PC-3 (cell line): ENCODE measurements at regions of chr7 and their contacts with region 1.

Region 1: GRCh38 chr7:12322284-12322902 is 81.3 kb downstream of the VWDE start:
- DNase-seq: peak; percentile 56
- ATAC-seq: peak; percentile 57
- H3K4me3 ChIP-seq: no peak overlapping the region
- H3K27ac ChIP-seq: no peak overlapping the region
- H3K4me1 ChIP-seq: peaks cover 12% of the 10 kb centered on the region
- H3K27me3 ChIP-seq: no peaks in the 10 kb centered on the region
- CTCF ChIP-seq: peak; percentile 86

Region 2: DNA sequence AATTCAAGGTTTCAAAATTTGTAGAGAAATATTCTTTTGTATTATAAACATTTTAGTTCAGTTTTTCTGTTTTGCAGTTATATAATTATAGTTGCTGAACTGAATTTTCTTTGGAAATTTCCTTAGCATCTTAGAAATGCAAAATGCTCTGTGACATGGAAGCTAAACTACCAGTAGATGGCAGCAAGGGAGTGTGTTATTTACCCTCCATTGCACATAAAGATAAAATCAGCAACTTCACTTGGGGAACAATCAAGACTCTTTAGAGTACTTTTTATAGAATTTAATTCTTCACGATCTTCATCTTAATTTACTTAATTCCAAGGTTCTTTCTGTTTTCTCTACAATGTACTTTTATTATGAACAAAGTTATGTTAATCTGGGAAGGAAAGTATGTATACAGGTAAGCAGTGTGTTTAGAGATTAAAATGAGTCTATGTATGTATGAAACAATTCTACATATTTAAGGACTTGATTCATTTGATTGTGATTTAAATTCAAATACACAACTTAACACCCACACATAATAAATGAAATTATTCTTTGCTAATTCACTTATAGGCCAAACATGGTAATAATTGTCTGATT is 894.6 kb before region 1 on chr7:
- CTCF ChIA-PET with region 1: no interaction called
- POLR2A ChIA-PET with region 1: no interaction called
- intact Hi-C with region 1: loop called (anchors 1 kb)
- DNase-seq: peak; percentile 74
- ATAC-seq: peak; percentile 62
- H3K4me3 ChIP-seq: no peak overlapping the region
- H3K27ac ChIP-seq: no peak overlapping the region
- H3K4me1 ChIP-seq: no peaks in the 10 kb centered on the region
- H3K27me3 ChIP-seq: no peaks in the 10 kb centered on the region
- CTCF ChIP-seq: peak; percentile 87

Region 3: GRCh38 chr7:12067141-12067831 is 255.1 kb before region 1 on chr7:
- CTCF ChIA-PET with region 1: interaction called, 11 read pairs
- POLR2A ChIA-PET with region 1: no interaction called
- intact Hi-C with region 1: loop called (anchors 1 kb)
- DNase-seq: peak; percentile 83
- ATAC-seq: peak; percentile 50
- H3K4me3 ChIP-seq: peak overlapping the region; percentile 58
- H3K27ac ChIP-seq: peak overlapping the region; percentile 100
- H3K4me1 ChIP-seq: peaks cover 29% of the 10 kb centered on the region
- H3K27me3 ChIP-seq: no peaks in the 10 kb centered on the region
- CTCF ChIP-seq: peak; percentile 86

Region 4: DNA sequence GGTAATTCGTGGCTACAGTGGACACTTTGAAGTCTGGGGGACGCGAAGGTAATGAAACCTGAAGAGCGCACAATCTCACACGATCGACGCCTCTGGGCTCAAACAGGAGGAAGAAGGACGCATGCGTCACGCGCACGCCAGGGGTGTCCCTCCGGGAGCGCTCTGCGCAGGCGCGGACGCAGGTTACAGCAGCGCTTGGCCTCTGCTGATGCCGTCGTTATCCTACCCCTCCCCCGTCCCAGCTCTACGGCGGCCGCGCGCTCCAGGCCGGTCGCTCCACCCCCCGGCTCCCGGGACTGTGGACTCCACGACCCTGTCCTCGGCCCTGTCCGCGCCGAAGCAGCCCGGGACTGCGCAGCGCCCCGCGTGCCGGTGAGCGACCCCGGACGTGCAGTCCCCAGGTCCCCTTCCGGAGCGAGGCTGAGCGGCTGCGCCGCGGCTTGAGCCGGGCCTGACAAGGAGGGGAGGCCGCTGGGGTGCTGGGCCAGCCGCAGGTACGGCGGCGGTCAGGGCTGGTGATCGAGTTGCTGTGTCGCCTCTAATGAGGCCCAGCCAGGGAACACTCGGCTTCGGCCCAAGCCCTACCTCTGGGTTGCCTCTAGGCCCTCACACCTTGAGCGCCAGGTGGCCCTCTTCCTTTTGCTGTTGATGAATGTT is 111.2 kb before region 1 on chr7 and contains the start of gene TMEM106B:
- CTCF ChIA-PET with region 1: interaction called, 7 read pairs
- POLR2A ChIA-PET with region 1: interaction called, 3 read pairs
- intact Hi-C with region 1: loop called (anchors 2 kb)
- DNase-seq: peak; percentile 97
- ATAC-seq: peak; percentile 87
- H3K4me3 ChIP-seq: peak within 1 kb of the TSS; percentile 80
- H3K27ac ChIP-seq: peak within 1 kb of the TSS; percentile 70
- H3K4me1 ChIP-seq: peaks cover 36% of the 10 kb centered on the region
- H3K27me3 ChIP-seq: no peaks in the 10 kb centered on the region
- CTCF ChIP-seq: peak; percentile 39; the same call in 1 of the 2 replicates
- total RNA-seq, gene TMEM106B: 32.5 and 41.6 TPM in 2 replicates

Region 5: DNA sequence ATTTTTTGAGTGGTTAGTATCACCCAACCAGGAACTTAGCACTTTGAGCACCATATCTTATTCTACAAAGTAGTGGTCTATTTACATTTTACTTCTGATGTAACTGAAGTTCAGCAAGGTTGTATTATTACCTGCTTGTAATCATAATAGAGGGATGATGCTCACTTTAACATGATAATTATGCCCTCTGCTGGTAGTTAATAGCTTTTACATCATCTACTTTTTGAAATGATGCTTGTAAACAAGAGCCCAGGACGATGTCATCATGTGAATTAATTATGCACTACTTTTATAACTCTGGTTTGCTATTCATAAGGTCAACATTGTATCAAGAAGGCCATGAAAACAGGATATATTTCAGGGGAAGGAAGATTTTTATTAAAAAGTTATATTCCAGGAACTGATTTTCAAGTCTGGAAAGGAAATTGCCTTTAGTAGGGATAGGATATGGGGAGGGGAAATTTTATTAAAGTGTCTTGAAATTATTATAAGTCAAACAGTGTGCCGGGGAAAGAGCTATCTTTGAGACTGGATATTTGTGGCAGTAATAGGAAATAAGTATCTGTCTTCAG is 167.8 kb after region 1 on chr7:
- CTCF ChIA-PET with region 1: interaction called, 5 read pairs
- POLR2A ChIA-PET with region 1: no interaction called
- intact Hi-C with region 1: loop called (anchors 2 kb)
- DNase-seq: peak; percentile 66
- ATAC-seq: peak; percentile 21; the same call in 1 of the 2 replicates
- H3K4me3 ChIP-seq: no peak overlapping the region
- H3K27ac ChIP-seq: no peak overlapping the region
- H3K4me1 ChIP-seq: peaks cover 41% of the 10 kb centered on the region
- H3K27me3 ChIP-seq: no peaks in the 10 kb centered on the region
- CTCF ChIP-seq: peak; percentile 77